Naive thymus-derived CD4-positive, alpha-beta T cell (primary cell): ENCODE measurements at regions of chr17 and their contacts with region 1.

Region 1: DNA sequence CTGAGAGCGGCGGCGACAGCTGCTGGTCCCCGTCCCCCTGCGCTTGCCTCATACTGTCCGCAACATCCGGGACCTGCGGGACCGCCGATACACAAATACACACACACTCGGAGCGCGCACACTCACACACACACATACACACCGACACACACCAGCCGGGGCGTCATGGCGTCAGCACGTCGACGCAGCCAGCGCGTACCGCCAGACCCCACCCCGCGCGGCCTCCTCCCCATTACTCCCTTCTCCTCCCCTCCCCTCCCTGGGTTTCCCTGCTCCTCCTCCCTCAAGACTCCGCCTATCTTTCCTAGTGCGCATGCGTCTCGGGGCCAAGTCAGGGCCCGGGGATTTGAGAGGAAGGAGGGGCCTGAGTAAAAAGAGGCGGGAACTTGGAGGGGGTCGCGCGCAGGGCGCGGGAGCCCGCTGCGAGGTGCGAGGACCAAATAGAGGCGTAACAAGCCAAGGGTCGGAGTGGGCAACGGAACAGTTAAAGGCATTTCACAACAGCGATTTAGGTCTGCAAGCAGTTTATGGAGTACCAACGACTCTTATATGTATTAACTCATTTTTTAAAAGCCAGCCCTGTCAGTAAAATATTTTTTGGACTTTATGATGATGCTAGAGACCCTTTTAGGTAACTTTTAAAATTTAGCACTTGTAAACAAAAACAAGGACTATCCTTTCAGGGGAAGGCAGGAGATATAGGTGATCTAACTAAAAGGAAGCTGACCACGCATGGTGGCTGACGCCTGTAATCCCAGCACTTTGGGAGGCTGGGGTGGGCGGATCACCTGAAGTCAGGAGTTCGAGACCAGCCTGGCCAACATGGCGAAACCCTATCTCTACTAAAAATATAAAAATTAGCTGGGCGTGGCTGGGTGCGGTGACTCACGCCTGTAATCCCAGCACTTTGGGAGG is at the start of gene SPOP:
- DNase-seq: peak; percentile 94 to 100 (median 99)
- ATAC-seq: peak; percentile 98
- H3K4me3 ChIP-seq: peak within 1 kb of the TSS; percentile 88
- H3K4me3 Mint-ChIP-seq: peak within 1 kb of the TSS; percentile 88 to 98 (median 94)
- H3K27ac ChIP-seq: peak within 1 kb of the TSS; percentile 87
- H3K27ac Mint-ChIP-seq: peak within 1 kb of the TSS; percentile 94 to 100 (median 98)
- H3K4me1 ChIP-seq: peaks cover 25 to 26% of the 10 kb centered on the region in 2 donors
- H3K4me1 Mint-ChIP-seq: peaks cover 36 to 65% (median 47%) of the 10 kb centered on the region in 7 donors
- H3K27me3 ChIP-seq: no peaks in the 10 kb centered on the region
- H3K27me3 Mint-ChIP-seq: peaks cover 0 to 13% (median 0%) of the 10 kb centered on the region in 5 donors
- total RNA-seq, gene SPOP: 59.6 to 94.8 (median 80.9) TPM

Region 2: GRCh38 chr17:49361902-49362722 is 316.1 kb before region 1 on chr17 and contains the start of gene ZNF652:
- CTCF ChIA-PET with region 1: no interaction called
- POLR2A ChIA-PET with region 1: no interaction called
- intact Hi-C with region 1: loop called (anchors 1 kb)
- DNase-seq: peak; percentile 86 to 98 (median 97)
- ATAC-seq: peak; percentile 81
- H3K4me3 ChIP-seq: peak within 1 kb of the TSS; percentile 67
- H3K4me3 Mint-ChIP-seq: peak within 1 kb of the TSS; percentile 88 to 99 (median 96)
- H3K27ac ChIP-seq: peak within 1 kb of the TSS; percentile 71
- H3K27ac Mint-ChIP-seq: peak within 1 kb of the TSS; percentile 92 to 97 (median 97)
- H3K4me1 ChIP-seq: peaks cover 26 to 33% of the 10 kb centered on the region in 2 donors
- H3K4me1 Mint-ChIP-seq: peaks cover 48 to 58% (median 53%) of the 10 kb centered on the region in 7 donors
- H3K27me3 ChIP-seq: no peaks in the 10 kb centered on the region
- H3K27me3 Mint-ChIP-seq: no peaks in the 10 kb centered on the region
- total RNA-seq, gene ZNF652: 33.8 to 64.4 (median 49.9) TPM

Region 3: GRCh38 chr17:49567871-49568694 is 110.1 kb before region 1 on chr17:
- CTCF ChIA-PET with region 1: interaction called, 6 read pairs
- POLR2A ChIA-PET with region 1: no interaction called
- intact Hi-C with region 1: loop called (anchors 1 kb)
- DNase-seq: peak; percentile 50 to 88 (median 72)
- ATAC-seq: peak; percentile 64
- H3K4me3 ChIP-seq: peak overlapping the region; percentile 15
- H3K4me3 Mint-ChIP-seq: peak overlapping the region; percentile 53 to 80 (median 70)
- H3K27ac ChIP-seq: no peak overlapping the region
- H3K27ac Mint-ChIP-seq: peak overlapping the region in 1 of 9 donors; percentile 7
- H3K4me1 ChIP-seq: peaks cover 6 to 7% of the 10 kb centered on the region in 2 donors
- H3K4me1 Mint-ChIP-seq: peaks cover 0 to 28% (median 15%) of the 10 kb centered on the region in 7 donors
- H3K27me3 ChIP-seq: no peaks in the 10 kb centered on the region
- H3K27me3 Mint-ChIP-seq: peaks cover under 1 to 38% (median 4%) of the 10 kb centered on the region in 5 donors

Region 4: DNA sequence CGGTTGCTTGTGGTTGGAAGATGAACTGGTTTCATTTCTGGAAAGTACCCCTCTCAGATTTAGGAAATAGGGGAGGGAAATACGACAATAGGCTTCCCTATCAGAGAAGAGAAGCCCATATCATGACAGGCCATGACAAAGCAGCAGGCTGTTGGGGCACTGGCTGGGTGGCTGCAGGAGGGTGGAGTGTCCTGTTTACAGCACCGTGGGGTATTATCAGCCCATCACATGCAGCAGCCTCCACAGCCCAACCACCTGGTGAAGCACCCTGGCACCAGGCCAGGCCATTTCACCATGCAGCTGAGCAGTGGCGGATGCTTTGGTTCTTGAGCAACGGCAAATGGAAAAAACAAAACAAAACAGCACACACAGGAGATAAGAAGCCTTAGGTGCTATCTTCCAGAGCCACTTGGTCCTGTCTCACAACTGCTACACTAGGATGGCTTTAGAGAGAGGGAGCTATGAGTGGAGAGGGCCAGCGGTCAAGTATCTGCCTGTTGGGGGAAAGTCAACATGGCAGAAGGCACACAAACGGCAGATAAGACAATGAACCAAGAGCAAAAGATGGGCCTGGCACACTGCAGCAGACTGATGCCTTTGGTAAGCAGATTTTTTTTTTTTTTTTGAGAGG is 61.6 kb after region 1 on chr17:
- CTCF ChIA-PET with region 1: no interaction called
- POLR2A ChIA-PET with region 1: interaction called, 7 read pairs
- intact Hi-C with region 1: loop called (anchors 1 kb)
- DNase-seq: peak; percentile 69 to 99 (median 98)
- ATAC-seq: peak; percentile 99
- H3K4me3 ChIP-seq: peak overlapping the region; percentile 67
- H3K4me3 Mint-ChIP-seq: peak overlapping the region; percentile 80 to 95 (median 90)
- H3K27ac ChIP-seq: peak overlapping the region; percentile 96
- H3K27ac Mint-ChIP-seq: peak overlapping the region; percentile 97 to 100 (median 99)
- H3K4me1 ChIP-seq: peaks cover 77 to 83% of the 10 kb centered on the region in 2 donors
- H3K4me1 Mint-ChIP-seq: peaks cover 62 to 97% (median 79%) of the 10 kb centered on the region in 7 donors
- H3K27me3 ChIP-seq: no peaks in the 10 kb centered on the region
- H3K27me3 Mint-ChIP-seq: no peaks in the 10 kb centered on the region

Region 5: GRCh38 chr17:49788478-49789242 is 110.5 kb after region 1 on chr17 and contains the start of gene KAT7:
- CTCF ChIA-PET with region 1: interaction called, 5 read pairs
- POLR2A ChIA-PET with region 1: interaction called, 5 read pairs
- intact Hi-C with region 1: loop called (anchors 1 kb)
- DNase-seq: peak; percentile 90 to 99 (median 99)
- ATAC-seq: peak; percentile 90
- H3K4me3 ChIP-seq: peak within 1 kb of the TSS; percentile 98
- H3K4me3 Mint-ChIP-seq: peak within 1 kb of the TSS; percentile 92 to 99 (median 96)
- H3K27ac ChIP-seq: peak within 1 kb of the TSS; percentile 98
- H3K27ac Mint-ChIP-seq: peak within 1 kb of the TSS; percentile 91 to 99 (median 98)
- H3K4me1 ChIP-seq: peaks cover 17 to 30% of the 10 kb centered on the region in 2 donors
- H3K4me1 Mint-ChIP-seq: peaks cover 39 to 62% (median 58%) of the 10 kb centered on the region in 7 donors
- H3K27me3 ChIP-seq: no peaks in the 10 kb centered on the region
- H3K27me3 Mint-ChIP-seq: peaks cover 0 to 8% (median 0%) of the 10 kb centered on the region in 5 donors
- total RNA-seq, gene KAT7: 85.6 to 195 (median 132) TPM

Region 6: DNA sequence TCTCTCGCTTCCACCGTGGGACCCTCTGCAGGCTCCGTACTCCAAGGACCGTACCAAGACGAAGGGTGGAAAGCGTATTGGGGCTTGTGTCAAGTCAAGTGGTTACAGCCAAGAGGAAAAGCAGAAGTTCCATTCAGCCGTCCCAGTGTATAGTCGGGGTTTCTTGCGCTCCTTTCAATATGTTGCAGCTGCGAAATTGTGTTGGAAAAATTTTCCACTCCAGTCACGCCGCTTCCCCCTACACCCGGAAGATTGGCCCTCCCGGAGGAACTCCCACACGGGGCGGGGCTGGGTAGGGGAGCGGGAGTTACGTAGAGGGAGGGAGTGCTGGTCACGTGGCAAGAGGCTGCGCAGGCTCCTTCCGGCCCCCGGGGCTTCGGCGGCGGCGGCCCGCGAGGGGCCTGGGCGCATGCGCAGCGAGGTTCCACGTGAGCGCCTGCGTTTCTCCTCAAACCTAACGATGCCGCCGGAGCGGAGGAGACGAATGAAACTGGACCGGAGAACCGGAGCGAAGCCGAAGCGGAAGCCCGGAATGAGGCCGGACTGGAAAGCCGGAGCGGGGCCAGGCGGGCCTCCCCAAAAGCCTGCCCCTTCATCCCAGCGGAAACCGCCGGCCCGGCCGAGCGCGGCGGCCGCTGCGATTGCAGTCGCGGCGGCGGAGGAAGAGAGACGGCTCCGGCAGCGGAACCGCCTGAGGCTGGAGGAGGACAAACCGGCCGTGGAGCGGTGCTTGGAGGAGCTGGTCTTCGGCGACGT is 1582.1 kb after region 1 on chr17 and contains the start of gene UTP18:
- CTCF ChIA-PET with region 1: no interaction called
- POLR2A ChIA-PET with region 1: no interaction called
- intact Hi-C with region 1: loop called in 1 of 2 experiments (anchors 5 kb)
- DNase-seq: peak; percentile 91 to 98 (median 97)
- ATAC-seq: peak; percentile 92
- H3K4me3 ChIP-seq: peak within 1 kb of the TSS; percentile 89
- H3K4me3 Mint-ChIP-seq: peak within 1 kb of the TSS; percentile 88 to 98 (median 96)
- H3K27ac ChIP-seq: peak within 1 kb of the TSS; percentile 89
- H3K27ac Mint-ChIP-seq: peak within 1 kb of the TSS; percentile 96 to 99 (median 98)
- H3K4me1 ChIP-seq: peaks cover 35 to 36% of the 10 kb centered on the region in 2 donors
- H3K4me1 Mint-ChIP-seq: peaks cover 45 to 80% (median 61%) of the 10 kb centered on the region in 7 donors
- H3K27me3 ChIP-seq: no peaks in the 10 kb centered on the region
- H3K27me3 Mint-ChIP-seq: no peaks in the 10 kb centered on the region
- total RNA-seq, gene UTP18: 31.1 to 46.2 (median 45.5) TPM